ENCODE measurements at regions of chr7 and their contacts with region 1.

Region 1: GRCh38 chr7:26500749-26501352 is 209.2 kb downstream of the SNX10 start:
- DNase-seq: peak in 1 of 2 experiments; percentile 13
- H3K4me3 ChIP-seq: no peak overlapping the region
- H3K4me3 Mint-ChIP-seq: no peak overlapping the region
- H3K27ac Mint-ChIP-seq: no peak overlapping the region
- H3K4me1 ChIP-seq: no peaks in the 10 kb centered on the region
- H3K4me1 Mint-ChIP-seq: no peaks in the 10 kb centered on the region
- H3K27me3 ChIP-seq: no peaks in the 10 kb centered on the region; the same call in 1 of the 2 replicates
- H3K27me3 Mint-ChIP-seq: peaks cover 14% of the 10 kb centered on the region
- CTCF ChIP-seq: peak; percentile 61 to 65

Region 2: GRCh38 chr7:26376175-26376917 is 124.5 kb before region 1 on chr7:
- CTCF ChIA-PET with region 1: interaction called, 4 read pairs
- POLR2A ChIA-PET with region 1: no interaction called
- intact Hi-C with region 1: loop called (anchors 1 kb)
- DNase-seq: peak in 1 of 2 experiments; percentile 60
- H3K4me3 ChIP-seq: peak overlapping the region; percentile 51
- H3K4me3 Mint-ChIP-seq: peak overlapping the region; percentile 76
- H3K27ac Mint-ChIP-seq: peak overlapping the region; percentile 15
- H3K4me1 ChIP-seq: no peaks in the 10 kb centered on the region
- H3K4me1 Mint-ChIP-seq: no peaks in the 10 kb centered on the region
- H3K27me3 ChIP-seq: no peaks in the 10 kb centered on the region
- H3K27me3 Mint-ChIP-seq: peaks cover 5% of the 10 kb centered on the region
- CTCF ChIP-seq: no peak

Region 3: GRCh38 chr7:26398756-26399501 is 101.9 kb before region 1 on chr7:
- CTCF ChIA-PET with region 1: no interaction called
- POLR2A ChIA-PET with region 1: interaction called, 4 read pairs
- intact Hi-C with region 1: loop called (anchors 5 kb)
- DNase-seq: peak; percentile 51 to 57
- H3K4me3 ChIP-seq: peak overlapping the region; percentile 80
- H3K4me3 Mint-ChIP-seq: peak overlapping the region; percentile 98
- H3K27ac Mint-ChIP-seq: peak overlapping the region; percentile 86
- H3K4me1 ChIP-seq: peaks cover 21% of the 10 kb centered on the region
- H3K4me1 Mint-ChIP-seq: peaks cover 32% of the 10 kb centered on the region
- H3K27me3 ChIP-seq: no peaks in the 10 kb centered on the region
- H3K27me3 Mint-ChIP-seq: no peaks in the 10 kb centered on the region
- CTCF ChIP-seq: peak in 1 of 2 experiments; percentile 58

Region 4: DNA sequence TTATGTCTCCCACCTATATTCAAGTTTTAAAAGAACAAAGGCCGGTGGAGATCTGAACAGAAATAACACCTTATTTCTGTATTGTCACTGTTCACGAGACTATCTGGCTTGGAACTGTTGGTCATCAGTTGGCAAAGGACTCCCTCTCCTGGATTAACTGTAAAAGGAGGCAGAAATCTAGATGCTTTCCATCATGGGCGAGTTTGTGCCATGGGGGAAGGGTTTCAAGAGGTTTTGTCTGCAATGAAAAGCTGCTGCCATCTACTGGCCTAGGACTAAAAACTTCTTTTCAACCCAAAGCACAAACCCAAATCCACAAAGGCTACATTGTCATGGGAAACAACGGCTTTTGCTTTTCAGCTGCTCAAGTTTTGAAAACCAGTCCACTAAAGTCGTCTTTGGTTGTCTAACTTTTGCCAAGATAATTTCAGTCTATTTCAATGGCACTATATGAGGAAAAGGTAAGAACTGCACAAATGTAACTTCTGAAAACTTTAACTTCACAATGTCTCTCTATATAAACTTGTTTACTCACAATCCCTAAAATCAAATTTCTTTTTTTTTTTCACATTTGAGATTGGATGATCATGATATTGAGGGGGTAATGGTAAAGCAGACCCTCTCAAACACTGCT is 166.8 kb after region 1 on chr7:
- CTCF ChIA-PET with region 1: no interaction called
- POLR2A ChIA-PET with region 1: no interaction called
- intact Hi-C with region 1: loop called (anchors 1 kb)
- DNase-seq: peak; percentile 85
- H3K4me3 ChIP-seq: no peak overlapping the region
- H3K4me3 Mint-ChIP-seq: no peak overlapping the region
- H3K27ac Mint-ChIP-seq: no peak overlapping the region
- H3K4me1 ChIP-seq: no peaks in the 10 kb centered on the region
- H3K4me1 Mint-ChIP-seq: no peaks in the 10 kb centered on the region
- H3K27me3 ChIP-seq: no peaks in the 10 kb centered on the region
- H3K27me3 Mint-ChIP-seq: no peaks in the 10 kb centered on the region
- CTCF ChIP-seq: peak; percentile 81 to 87

Measured in Caco-2 (cell line).